Activated CD4-positive, alpha-beta T cell treated with anti-CD3 and anti-CD28 coated beads for 36 hours (primary cell): ENCODE measurements at regions of chr7 and their contacts with region 1.

Region 1: DNA sequence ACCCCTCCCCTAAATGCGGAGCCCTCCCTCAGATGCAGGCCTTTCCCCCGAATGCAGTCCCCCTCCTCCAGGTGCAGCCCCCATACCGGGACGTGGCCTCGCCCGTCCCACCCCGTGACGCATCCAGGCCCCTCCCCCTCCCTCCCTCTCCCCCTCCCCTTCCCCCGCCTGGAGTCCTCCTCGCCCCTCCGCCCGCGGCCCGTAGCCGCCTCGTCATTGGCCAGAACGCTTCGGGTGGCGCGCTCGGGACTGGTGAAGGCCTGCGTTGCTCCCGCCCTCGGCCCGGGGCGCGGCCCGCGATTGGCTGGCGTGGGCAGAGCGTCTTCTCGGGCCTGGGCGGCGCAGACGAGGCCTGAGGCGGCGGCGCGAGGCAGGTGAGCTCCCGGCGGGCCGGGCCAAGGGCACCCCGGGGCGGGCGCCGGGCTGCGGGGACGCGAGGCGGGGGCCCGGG is 16.0 kb upstream of the SUN1 start:
- DNase-seq: peak; percentile 99
- ATAC-seq: peak; percentile 97
- H3K4me3 Mint-ChIP-seq: peak overlapping the region; percentile 60
- H3K27ac Mint-ChIP-seq: no peak overlapping the region
- H3K4me1 Mint-ChIP-seq: peaks cover 62% of the 10 kb centered on the region
- H3K27me3 Mint-ChIP-seq: peaks cover 6% of the 10 kb centered on the region

Region 2: DNA sequence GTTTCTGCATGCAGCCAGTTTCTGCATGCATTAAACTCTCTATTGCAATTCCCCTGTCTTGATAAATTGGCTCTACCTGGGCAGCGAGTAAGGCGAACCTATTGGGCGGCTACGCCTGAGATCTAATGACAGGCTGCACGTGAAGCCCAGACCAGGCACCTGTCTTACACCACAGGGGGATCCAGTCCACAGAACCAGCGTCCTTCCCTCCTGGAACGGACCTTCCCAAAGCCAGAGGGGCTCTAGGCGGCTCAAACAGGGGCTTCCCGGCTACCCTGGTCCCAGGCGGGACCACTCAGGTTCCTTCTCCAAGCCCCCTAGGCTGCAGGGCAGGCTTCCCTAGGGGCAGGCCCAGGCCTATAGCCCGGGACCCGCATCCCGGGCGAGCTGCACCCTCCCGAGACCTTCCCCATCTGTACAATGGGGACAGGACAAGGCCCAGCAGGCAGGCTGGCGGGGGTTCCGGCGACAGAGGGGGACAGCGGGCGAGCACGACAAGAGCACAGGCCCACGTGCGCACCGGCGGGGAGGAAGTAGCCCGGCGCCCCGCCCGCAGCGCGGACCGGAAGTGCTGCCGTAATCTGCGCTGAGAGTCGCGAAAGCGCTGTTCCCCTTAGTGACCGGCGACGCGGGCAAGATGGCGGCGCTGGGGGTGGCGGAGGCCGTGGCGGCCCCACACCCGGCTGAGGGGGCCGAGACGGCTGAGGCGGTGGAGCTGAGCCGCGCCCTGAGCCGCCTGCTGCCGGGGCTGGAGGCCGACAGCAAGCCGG is 90.1 kb before region 1 on chr7 and contains the start of gene DNAAF5:
- CTCF ChIA-PET with region 1: no interaction called
- POLR2A ChIA-PET with region 1: no interaction called
- intact Hi-C with region 1: loop called in 1 of 2 experiments (anchors 1 kb)
- DNase-seq: peak; percentile 93
- ATAC-seq: peak; percentile 89
- H3K4me3 Mint-ChIP-seq: peak within 1 kb of the TSS; percentile 83
- H3K27ac Mint-ChIP-seq: peak within 1 kb of the TSS; percentile 90
- H3K4me1 Mint-ChIP-seq: peaks cover 26% of the 10 kb centered on the region
- H3K27me3 Mint-ChIP-seq: no peaks in the 10 kb centered on the region
- total RNA-seq, gene DNAAF5: 31.5 to 37.2 TPM

Region 3: GRCh38 chr7:786472-787255 is 29.7 kb before region 1 on chr7:
- CTCF ChIA-PET with region 1: interaction called, 5 read pairs
- POLR2A ChIA-PET with region 1: no interaction called
- intact Hi-C with region 1: loop called in 1 of 2 experiments (anchors 1 kb)
- DNase-seq: peak; percentile 84
- ATAC-seq: peak; percentile 91
- H3K4me3 Mint-ChIP-seq: no peak overlapping the region
- H3K27ac Mint-ChIP-seq: no peak overlapping the region
- H3K4me1 Mint-ChIP-seq: no peaks in the 10 kb centered on the region
- H3K27me3 Mint-ChIP-seq: no peaks in the 10 kb centered on the region

Region 4: GRCh38 chr7:831596-832166 is 15.4 kb after region 1 on chr7:
- CTCF ChIA-PET with region 1: interaction called, 13 read pairs
- POLR2A ChIA-PET with region 1: interaction called, 12 read pairs
- intact Hi-C with region 1: loop called (anchors 1 kb)
- DNase-seq: no peak
- ATAC-seq: peak; percentile 69
- H3K4me3 Mint-ChIP-seq: peak overlapping the region; percentile 63
- H3K27ac Mint-ChIP-seq: peak overlapping the region; percentile 98
- H3K4me1 Mint-ChIP-seq: peaks cover 64% of the 10 kb centered on the region
- H3K27me3 Mint-ChIP-seq: no peaks in the 10 kb centered on the region

Region 5: GRCh38 chr7:1169409-1170368 is 353.4 kb after region 1 on chr7:
- CTCF ChIA-PET with region 1: no interaction called
- POLR2A ChIA-PET with region 1: no interaction called
- intact Hi-C with region 1: loop called in 1 of 2 experiments (anchors 2 kb)
- DNase-seq: peak; percentile 98
- ATAC-seq: peak; percentile 99
- H3K4me3 Mint-ChIP-seq: peak overlapping the region; percentile 71
- H3K27ac Mint-ChIP-seq: peak overlapping the region; percentile 94
- H3K4me1 Mint-ChIP-seq: peaks cover 12% of the 10 kb centered on the region
- H3K27me3 Mint-ChIP-seq: no peaks in the 10 kb centered on the region